Caco-2 (cell line): ENCODE measurements at regions of chr14 and their contacts with region 1.

Region 1: DNA sequence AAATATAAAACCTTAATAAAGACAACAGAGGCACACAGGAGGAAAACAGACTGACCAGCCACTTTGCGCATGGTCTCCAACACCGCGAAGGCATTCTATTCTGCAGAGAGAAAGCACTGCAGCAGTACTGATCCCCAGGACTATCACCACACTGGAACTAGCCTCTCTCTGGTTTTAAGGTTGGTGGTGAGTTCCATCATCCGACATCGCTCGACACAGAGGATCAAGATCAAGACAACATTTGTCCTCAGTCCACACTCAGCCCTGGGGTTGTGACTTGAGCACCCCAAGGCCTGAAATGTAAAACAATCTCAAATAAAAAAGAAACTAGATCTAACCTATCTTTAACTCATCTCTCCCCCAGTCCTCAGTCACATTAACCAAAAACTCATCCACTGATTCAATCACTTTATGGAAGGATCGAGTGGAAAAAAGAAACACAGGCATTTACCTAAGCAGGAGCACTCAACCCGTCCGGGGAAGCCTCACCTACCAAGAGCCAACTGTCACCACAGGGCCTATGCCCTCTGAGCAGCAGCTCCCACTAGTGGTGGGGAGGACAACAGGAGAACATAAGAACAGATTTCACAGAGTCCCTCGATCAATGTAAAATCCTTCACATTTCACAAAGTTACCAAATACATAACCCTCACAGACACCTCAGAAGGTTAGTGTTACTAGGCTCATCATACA is 17.7 kb downstream of the STXBP6 start:
- DNase-seq: peak; percentile 63 to 67
- H3K4me3 ChIP-seq: peak overlapping the region; percentile 23; the same call in 1 of the 2 replicates
- H3K4me3 Mint-ChIP-seq: no peak overlapping the region
- H3K27ac Mint-ChIP-seq: no peak overlapping the region
- H3K4me1 ChIP-seq: peaks cover 23% of the 10 kb centered on the region
- H3K4me1 Mint-ChIP-seq: peaks cover 7% of the 10 kb centered on the region
- H3K27me3 ChIP-seq: no peaks in the 10 kb centered on the region
- H3K27me3 Mint-ChIP-seq: no peaks in the 10 kb centered on the region
- CTCF ChIP-seq: peak; percentile 51 to 64

Region 2: GRCh38 chr14:24734878-24735500 is 297.2 kb before region 1 on chr14:
- CTCF ChIA-PET with region 1: no interaction called
- POLR2A ChIA-PET with region 1: no interaction called
- intact Hi-C with region 1: loop called (anchors 2 kb)
- DNase-seq: peak; percentile 42 to 66
- H3K4me3 ChIP-seq: no peak overlapping the region
- H3K4me3 Mint-ChIP-seq: no peak overlapping the region
- H3K27ac Mint-ChIP-seq: no peak overlapping the region
- H3K4me1 ChIP-seq: no peaks in the 10 kb centered on the region
- H3K4me1 Mint-ChIP-seq: no peaks in the 10 kb centered on the region
- H3K27me3 ChIP-seq: no peaks in the 10 kb centered on the region
- H3K27me3 Mint-ChIP-seq: no peaks in the 10 kb centered on the region
- CTCF ChIP-seq: peak; percentile 69 to 70

Region 3: DNA sequence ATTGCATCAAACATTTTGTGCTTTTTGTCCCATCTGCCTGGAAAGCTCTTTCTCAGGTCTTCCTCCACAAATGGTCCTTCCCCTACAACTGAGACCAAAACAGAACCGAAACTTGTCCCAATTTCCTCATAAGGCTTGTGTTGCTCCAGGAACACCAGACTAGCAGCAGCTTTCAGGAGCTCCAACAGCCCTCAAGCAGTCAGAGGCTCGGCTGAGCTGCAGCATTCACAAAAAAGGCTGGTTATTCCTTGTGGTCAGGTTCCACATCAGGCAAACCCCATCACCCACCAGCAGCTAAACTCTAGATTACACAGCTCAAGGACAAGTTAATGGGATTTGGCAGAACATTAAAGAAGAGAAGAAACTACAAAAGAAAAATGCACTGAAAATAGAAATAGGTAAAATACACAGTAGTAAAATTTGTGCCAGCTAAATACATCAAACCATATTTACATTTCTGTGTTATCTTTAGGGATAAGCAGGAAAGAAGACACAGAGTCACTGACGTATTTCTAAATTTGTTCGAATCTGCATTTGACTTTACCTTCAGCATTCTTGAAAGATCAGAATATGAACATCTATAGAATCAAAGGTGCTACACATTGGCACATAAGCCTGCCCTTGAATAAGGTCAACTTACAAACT is 123.5 kb before region 1 on chr14:
- CTCF ChIA-PET with region 1: no interaction called
- POLR2A ChIA-PET with region 1: no interaction called
- intact Hi-C with region 1: loop called (anchors 5 kb)
- DNase-seq: no peak
- H3K4me3 ChIP-seq: no peak overlapping the region
- H3K4me3 Mint-ChIP-seq: no peak overlapping the region
- H3K27ac Mint-ChIP-seq: no peak overlapping the region
- H3K4me1 ChIP-seq: peaks cover 17% of the 10 kb centered on the region; the same call in 1 of the 2 replicates
- H3K4me1 Mint-ChIP-seq: peaks cover 21% of the 10 kb centered on the region
- H3K27me3 ChIP-seq: no peaks in the 10 kb centered on the region
- H3K27me3 Mint-ChIP-seq: no peaks in the 10 kb centered on the region
- CTCF ChIP-seq: no peak

Region 4: DNA sequence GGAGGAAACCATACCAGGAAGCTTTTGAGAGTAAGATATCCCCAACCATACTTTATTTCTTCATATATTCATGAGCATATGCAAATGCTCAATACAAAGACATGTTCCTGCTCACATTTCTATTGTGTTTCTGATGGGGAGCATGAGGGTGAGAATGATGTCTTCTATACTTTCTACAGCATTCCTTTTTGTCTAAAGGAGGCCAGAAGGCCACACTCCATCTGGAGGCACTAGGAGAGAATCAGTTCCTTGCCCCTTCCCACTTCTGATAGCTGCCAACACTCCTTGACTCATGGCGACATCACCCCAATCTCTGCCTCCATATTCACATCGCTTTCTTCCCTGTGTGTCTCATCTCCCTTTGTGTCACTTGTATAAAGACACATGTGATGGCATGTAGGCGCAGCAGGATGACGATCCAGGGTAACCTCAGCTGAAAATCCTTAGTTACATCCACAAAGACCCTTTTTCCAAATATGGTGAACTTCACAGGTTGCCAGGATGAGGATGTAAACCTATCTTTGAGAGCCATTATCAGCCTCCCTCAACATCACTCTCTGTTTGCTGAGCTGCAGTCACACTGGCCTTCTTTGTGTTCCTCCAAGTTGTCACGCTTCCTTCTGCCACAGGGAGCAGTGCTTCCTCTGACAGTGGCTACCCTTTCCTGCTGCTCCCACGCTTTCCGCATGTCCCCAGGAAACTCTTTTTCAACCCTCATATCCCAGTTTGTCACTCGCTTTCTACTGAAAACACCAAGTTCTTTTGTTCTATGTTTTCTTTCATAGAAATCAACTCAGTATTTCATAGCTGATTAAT is 79.2 kb before region 1 on chr14:
- CTCF ChIA-PET with region 1: no interaction called
- POLR2A ChIA-PET with region 1: no interaction called
- intact Hi-C with region 1: loop called (anchors 1 kb)
- DNase-seq: peak; percentile 55 to 59
- H3K4me3 ChIP-seq: no peak overlapping the region
- H3K4me3 Mint-ChIP-seq: no peak overlapping the region
- H3K27ac Mint-ChIP-seq: no peak overlapping the region
- H3K4me1 ChIP-seq: peaks cover 22% of the 10 kb centered on the region
- H3K4me1 Mint-ChIP-seq: peaks cover 27% of the 10 kb centered on the region
- H3K27me3 ChIP-seq: no peaks in the 10 kb centered on the region
- H3K27me3 Mint-ChIP-seq: no peaks in the 10 kb centered on the region
- CTCF ChIP-seq: peak; percentile 45 to 63